CD8-positive, alpha-beta T cell (primary cell): ENCODE measurements at regions of chr4 and their contacts with region 1.

Region 1: GRCh38 chr4:99117876-99118693 is 26.0 kb downstream of the ADH4 start:
- DNase-seq: peak in 2 of 9 experiments; percentile 13 to 29
- ATAC-seq: no peak
- H3K4me3 ChIP-seq: no peak overlapping the region
- H3K4me3 Mint-ChIP-seq: no peak overlapping the region
- H3K27ac ChIP-seq: no peak overlapping the region
- H3K27ac Mint-ChIP-seq: no peak overlapping the region
- H3K4me1 ChIP-seq: no peaks in the 10 kb centered on the region
- H3K4me1 Mint-ChIP-seq: no peaks in the 10 kb centered on the region
- H3K27me3 ChIP-seq: no peaks in the 10 kb centered on the region
- H3K27me3 Mint-ChIP-seq: peaks cover 2% of the 10 kb centered on the region
- CTCF ChIP-seq: peak; percentile 64

Region 2: DNA sequence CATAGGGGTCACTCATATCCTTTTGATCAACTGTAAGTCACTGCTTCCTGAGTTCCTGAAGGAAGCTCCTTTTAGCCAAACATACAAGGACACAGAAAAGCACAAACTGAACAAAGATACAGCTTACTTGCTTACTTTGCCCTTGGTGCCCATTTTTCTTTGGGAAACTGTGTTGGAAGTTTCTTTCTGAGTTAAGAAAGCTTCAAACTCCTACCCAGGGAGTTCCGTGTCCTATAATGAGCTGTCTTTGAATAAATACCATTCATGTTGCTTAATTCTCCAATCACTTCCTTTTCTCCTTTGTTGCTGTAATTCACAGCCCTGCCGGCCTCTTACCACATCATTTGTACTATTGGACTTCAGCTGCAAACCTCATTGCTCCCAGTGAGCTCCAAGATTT is 26.0 kb after region 1 on chr4 and contains the start of gene ADH4:
- CTCF ChIA-PET with region 1: no interaction called
- POLR2A ChIA-PET with region 1: no interaction called
- intact Hi-C with region 1: no loop called
- DNase-seq: no peak
- ATAC-seq: no peak
- H3K4me3 ChIP-seq: no peak within 1 kb of the TSS
- H3K4me3 Mint-ChIP-seq: no peak within 1 kb of the TSS
- H3K27ac ChIP-seq: no peak within 1 kb of the TSS
- H3K27ac Mint-ChIP-seq: no peak within 1 kb of the TSS
- H3K4me1 ChIP-seq: no peaks in the 10 kb centered on the region
- H3K4me1 Mint-ChIP-seq: no peaks in the 10 kb centered on the region
- H3K27me3 ChIP-seq: no peaks in the 10 kb centered on the region
- H3K27me3 Mint-ChIP-seq: no peaks in the 10 kb centered on the region
- CTCF ChIP-seq: no peak
- total RNA-seq, gene ADH4: not detected

Region 3: GRCh38 chr4:99405433-99406115 is 287.5 kb after region 1 on chr4:
- CTCF ChIA-PET with region 1: no interaction called
- POLR2A ChIA-PET with region 1: no interaction called
- intact Hi-C with region 1: loop called (anchors 1 kb)
- DNase-seq: peak; percentile 34 to 71 (median 56)
- ATAC-seq: peak; percentile 70
- H3K4me3 ChIP-seq: no peak overlapping the region
- H3K4me3 Mint-ChIP-seq: no peak overlapping the region
- H3K27ac ChIP-seq: no peak overlapping the region
- H3K27ac Mint-ChIP-seq: no peak overlapping the region
- H3K4me1 ChIP-seq: no peaks in the 10 kb centered on the region
- H3K4me1 Mint-ChIP-seq: no peaks in the 10 kb centered on the region
- H3K27me3 ChIP-seq: no peaks in the 10 kb centered on the region
- H3K27me3 Mint-ChIP-seq: no peaks in the 10 kb centered on the region
- CTCF ChIP-seq: peak; percentile 93

Region 4: DNA sequence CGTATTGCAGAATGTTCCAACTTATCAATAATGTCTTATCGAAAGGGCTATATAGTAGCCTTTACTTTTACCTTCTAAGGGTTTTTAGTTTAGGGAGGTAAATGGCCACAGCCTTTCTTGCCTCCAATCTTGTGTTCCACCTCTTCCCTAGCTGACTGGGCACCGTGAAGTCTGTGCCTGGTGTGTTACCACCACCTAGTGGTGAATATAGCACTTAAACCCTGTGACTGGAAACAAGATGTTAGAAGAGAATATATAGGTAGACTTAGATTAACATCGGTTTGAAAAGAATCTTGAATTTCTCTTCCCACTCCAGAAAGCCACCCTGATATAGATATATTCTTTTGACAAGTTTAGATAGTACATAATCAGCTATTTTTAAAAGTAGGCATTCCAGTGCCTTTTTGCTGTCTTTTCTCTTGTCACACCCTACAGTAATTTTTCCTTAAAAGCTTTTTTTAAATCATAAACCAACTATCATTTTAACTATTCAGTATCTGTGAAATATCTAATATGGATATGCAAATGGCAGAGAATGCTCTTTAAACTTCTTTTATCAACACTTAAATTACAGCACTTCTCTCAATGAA is 344.9 kb after region 1 on chr4:
- CTCF ChIA-PET with region 1: interaction called, 4 read pairs
- POLR2A ChIA-PET with region 1: no interaction called
- intact Hi-C with region 1: loop called (anchors 1 to 5 kb)
- DNase-seq: peak; percentile 3 to 64 (median 38)
- ATAC-seq: peak; percentile 67
- H3K4me3 ChIP-seq: no peak overlapping the region
- H3K4me3 Mint-ChIP-seq: no peak overlapping the region
- H3K27ac ChIP-seq: no peak overlapping the region
- H3K27ac Mint-ChIP-seq: no peak overlapping the region
- H3K4me1 ChIP-seq: no peaks in the 10 kb centered on the region
- H3K4me1 Mint-ChIP-seq: no peaks in the 10 kb centered on the region
- H3K27me3 ChIP-seq: peaks cover 0 to 2% of the 10 kb centered on the region in 2 experiments
- H3K27me3 Mint-ChIP-seq: peaks cover 13% of the 10 kb centered on the region
- CTCF ChIP-seq: peak; percentile 75

Region 5: GRCh38 chr4:99885063-99885664 is 767.1 kb after region 1 on chr4:
- CTCF ChIA-PET with region 1: no interaction called
- POLR2A ChIA-PET with region 1: no interaction called
- intact Hi-C with region 1: loop called in 1 of 2 experiments (anchors 10 kb)
- DNase-seq: peak in 4 of 9 experiments; percentile 20 to 72 (median 41)
- ATAC-seq: no peak
- H3K4me3 ChIP-seq: no peak overlapping the region
- H3K4me3 Mint-ChIP-seq: no peak overlapping the region
- H3K27ac ChIP-seq: no peak overlapping the region
- H3K27ac Mint-ChIP-seq: no peak overlapping the region
- H3K4me1 ChIP-seq: peaks cover 2% of the 10 kb centered on the region
- H3K4me1 Mint-ChIP-seq: peaks cover 16% of the 10 kb centered on the region
- H3K27me3 ChIP-seq: no peaks in the 10 kb centered on the region
- H3K27me3 Mint-ChIP-seq: no peaks in the 10 kb centered on the region
- CTCF ChIP-seq: peak; percentile 67

Region 6: DNA sequence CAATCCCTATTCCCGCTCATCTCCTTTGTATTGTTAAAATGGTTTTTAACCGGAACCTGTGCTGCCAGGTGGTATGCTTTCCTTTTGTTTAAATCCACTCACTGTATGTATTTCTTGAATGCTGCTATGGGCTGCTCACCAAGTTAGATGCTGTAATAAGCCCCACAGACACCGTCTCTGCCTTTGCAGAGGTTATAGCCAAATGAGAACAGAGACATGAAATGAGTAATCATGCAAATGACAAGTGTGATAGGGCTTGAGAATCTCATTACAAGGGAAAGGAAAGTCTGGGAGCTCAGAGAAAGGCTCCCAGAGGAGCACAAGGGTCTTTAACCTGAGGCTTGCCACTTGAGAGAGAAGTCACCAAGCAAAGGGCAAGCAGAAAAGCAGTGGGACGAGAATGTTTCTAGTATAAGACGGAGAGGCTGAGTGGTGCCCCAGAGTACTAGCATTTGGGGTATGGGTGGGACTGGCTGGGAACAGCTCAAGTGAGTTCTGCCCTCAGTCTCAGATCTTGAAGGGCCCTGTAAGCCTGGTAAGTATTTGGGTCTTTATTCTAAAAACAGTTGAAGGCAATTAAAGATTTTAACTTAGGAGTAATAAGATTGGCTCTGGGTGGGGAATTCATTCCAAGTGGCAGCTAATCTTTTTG is 942.8 kb after region 1 on chr4:
- CTCF ChIA-PET with region 1: no interaction called
- POLR2A ChIA-PET with region 1: no interaction called
- intact Hi-C with region 1: loop called in 1 of 2 experiments (anchors 10 kb)
- DNase-seq: no peak
- ATAC-seq: no peak
- H3K4me3 ChIP-seq: no peak overlapping the region
- H3K4me3 Mint-ChIP-seq: no peak overlapping the region
- H3K27ac ChIP-seq: no peak overlapping the region
- H3K27ac Mint-ChIP-seq: no peak overlapping the region
- H3K4me1 ChIP-seq: no peaks in the 10 kb centered on the region
- H3K4me1 Mint-ChIP-seq: no peaks in the 10 kb centered on the region
- H3K27me3 ChIP-seq: peaks cover 0 to 6% of the 10 kb centered on the region in 2 experiments
- H3K27me3 Mint-ChIP-seq: no peaks in the 10 kb centered on the region
- CTCF ChIP-seq: no peak